ENCODE measurements at regions of chr21 and their contacts with region 1.

Region 1: DNA sequence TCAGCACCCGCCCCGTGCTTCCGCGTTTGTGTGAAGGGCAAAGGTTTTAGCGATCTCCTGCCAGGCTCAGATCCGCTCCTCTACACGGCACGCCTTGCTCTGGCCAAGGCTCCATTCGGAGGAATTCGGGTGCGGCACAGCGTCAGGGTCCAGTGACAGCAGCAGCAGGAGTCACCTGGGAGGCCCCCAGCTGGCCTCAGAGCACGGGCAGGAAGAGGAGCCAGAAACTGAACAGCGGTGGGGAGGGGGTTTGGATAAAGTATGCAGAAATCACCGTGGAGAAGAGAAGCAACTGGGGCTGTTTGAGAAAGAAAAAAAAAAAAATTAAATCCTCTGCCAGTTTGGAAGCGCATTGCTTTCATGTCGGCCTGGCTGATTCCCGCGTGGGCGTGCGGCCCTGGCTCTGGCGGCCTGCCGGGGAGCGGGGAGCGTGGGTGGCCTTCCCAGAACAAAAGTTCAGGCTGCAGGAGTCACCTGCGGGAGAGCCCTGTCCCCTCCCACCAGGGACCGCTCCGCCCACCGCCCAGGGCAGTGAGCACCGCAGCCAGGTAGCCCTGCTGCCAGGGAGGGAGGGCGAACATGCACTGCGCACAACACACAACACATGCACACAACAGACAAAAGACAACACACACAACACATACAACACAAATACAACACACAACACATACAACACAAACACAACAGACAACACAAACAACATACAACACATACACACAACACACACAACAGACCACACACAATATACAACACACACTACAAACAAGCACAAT is 107.6 kb downstream of the ETS2 start:
- DNase-seq: peak; percentile 88 to 93
- H3K4me3 ChIP-seq: peak overlapping the region; percentile 16
- H3K4me3 Mint-ChIP-seq: no peak overlapping the region
- H3K27ac Mint-ChIP-seq: no peak overlapping the region
- H3K4me1 ChIP-seq: peaks cover 47% of the 10 kb centered on the region
- H3K4me1 Mint-ChIP-seq: peaks cover 18% of the 10 kb centered on the region
- H3K27me3 ChIP-seq: no peaks in the 10 kb centered on the region
- H3K27me3 Mint-ChIP-seq: no peaks in the 10 kb centered on the region
- CTCF ChIP-seq: no peak

Region 2: DNA sequence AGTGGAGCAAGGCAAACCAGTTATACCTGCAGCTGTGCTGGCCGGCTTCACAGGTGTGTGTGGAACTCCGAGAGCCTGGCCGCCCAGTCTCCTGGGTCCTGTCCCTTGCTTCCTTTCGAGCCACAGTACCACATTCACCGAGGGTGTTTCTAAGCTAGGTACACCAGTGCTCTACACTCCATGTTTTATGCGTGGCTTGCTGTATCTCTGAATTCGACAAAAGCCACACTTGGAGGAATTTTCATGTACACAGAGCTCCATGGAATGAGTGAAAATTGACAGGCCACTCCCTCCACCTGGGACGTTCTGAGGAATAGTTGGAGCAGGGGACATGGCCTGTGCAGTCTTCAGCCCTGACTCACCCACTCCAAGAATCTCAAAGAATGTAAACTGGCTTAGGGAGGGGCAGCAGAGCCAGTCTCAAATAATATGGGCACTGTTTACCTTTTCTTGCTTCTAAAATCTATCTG is 93.6 kb before region 1 on chr21:
- CTCF ChIA-PET with region 1: no interaction called
- POLR2A ChIA-PET with region 1: no interaction called
- intact Hi-C with region 1: no loop called
- DNase-seq: peak; percentile 63 to 80
- H3K4me3 ChIP-seq: no peak overlapping the region
- H3K4me3 Mint-ChIP-seq: peak overlapping the region; percentile 38
- H3K27ac Mint-ChIP-seq: peak overlapping the region; percentile 85
- H3K4me1 ChIP-seq: peaks cover 15% of the 10 kb centered on the region
- H3K4me1 Mint-ChIP-seq: no peaks in the 10 kb centered on the region
- H3K27me3 ChIP-seq: no peaks in the 10 kb centered on the region
- H3K27me3 Mint-ChIP-seq: no peaks in the 10 kb centered on the region
- CTCF ChIP-seq: no peak

Region 3: GRCh38 chr21:38958940-38959691 is 45.8 kb after region 1 on chr21:
- CTCF ChIA-PET with region 1: no interaction called
- POLR2A ChIA-PET with region 1: interaction called, 3 read pairs
- intact Hi-C with region 1: loop called (anchors 2 kb)
- DNase-seq: peak; percentile 52 to 57
- H3K4me3 ChIP-seq: no peak overlapping the region
- H3K4me3 Mint-ChIP-seq: peak overlapping the region; percentile 57
- H3K27ac Mint-ChIP-seq: peak overlapping the region; percentile 81
- H3K4me1 ChIP-seq: peaks cover 56% of the 10 kb centered on the region
- H3K4me1 Mint-ChIP-seq: peaks cover 19% of the 10 kb centered on the region
- H3K27me3 ChIP-seq: no peaks in the 10 kb centered on the region
- H3K27me3 Mint-ChIP-seq: no peaks in the 10 kb centered on the region
- CTCF ChIP-seq: no peak

Region 4: DNA sequence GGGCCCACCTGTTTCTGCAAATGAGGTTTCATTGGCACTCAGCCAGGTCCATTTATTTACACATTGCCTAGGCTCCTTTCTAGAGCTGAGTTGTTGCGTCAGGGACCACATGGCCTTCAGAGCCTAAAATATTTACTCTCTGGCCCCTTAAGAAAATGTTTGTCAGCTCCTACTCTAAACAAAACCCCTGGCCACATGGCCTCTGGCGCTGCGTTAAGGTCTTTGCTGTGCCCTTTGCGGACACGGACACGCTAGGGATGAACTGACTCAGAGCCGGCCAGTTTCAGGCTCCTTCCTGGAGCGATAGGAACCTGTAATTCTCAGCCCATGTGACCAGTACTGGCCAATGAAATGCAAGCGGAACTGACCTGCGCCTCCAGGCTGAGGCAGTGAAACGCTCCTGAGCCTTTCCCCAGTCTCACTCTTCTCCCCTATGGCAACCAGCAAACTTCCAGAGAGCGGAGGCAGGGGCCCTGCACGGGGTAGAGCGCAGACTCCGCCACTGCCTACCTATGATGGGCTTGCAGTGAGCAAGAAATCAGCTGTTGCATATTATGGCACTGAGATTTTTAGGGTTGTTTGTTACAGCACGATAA is 52.7 kb after region 1 on chr21:
- CTCF ChIA-PET with region 1: no interaction called
- POLR2A ChIA-PET with region 1: no interaction called
- intact Hi-C with region 1: loop called (anchors 2 kb)
- DNase-seq: peak; percentile 89 to 95
- H3K4me3 ChIP-seq: no peak overlapping the region
- H3K4me3 Mint-ChIP-seq: peak overlapping the region; percentile 59
- H3K27ac Mint-ChIP-seq: peak overlapping the region; percentile 90
- H3K4me1 ChIP-seq: peaks cover 20% of the 10 kb centered on the region
- H3K4me1 Mint-ChIP-seq: peaks cover 21% of the 10 kb centered on the region
- H3K27me3 ChIP-seq: no peaks in the 10 kb centered on the region
- H3K27me3 Mint-ChIP-seq: no peaks in the 10 kb centered on the region
- CTCF ChIP-seq: no peak

Region 5: DNA sequence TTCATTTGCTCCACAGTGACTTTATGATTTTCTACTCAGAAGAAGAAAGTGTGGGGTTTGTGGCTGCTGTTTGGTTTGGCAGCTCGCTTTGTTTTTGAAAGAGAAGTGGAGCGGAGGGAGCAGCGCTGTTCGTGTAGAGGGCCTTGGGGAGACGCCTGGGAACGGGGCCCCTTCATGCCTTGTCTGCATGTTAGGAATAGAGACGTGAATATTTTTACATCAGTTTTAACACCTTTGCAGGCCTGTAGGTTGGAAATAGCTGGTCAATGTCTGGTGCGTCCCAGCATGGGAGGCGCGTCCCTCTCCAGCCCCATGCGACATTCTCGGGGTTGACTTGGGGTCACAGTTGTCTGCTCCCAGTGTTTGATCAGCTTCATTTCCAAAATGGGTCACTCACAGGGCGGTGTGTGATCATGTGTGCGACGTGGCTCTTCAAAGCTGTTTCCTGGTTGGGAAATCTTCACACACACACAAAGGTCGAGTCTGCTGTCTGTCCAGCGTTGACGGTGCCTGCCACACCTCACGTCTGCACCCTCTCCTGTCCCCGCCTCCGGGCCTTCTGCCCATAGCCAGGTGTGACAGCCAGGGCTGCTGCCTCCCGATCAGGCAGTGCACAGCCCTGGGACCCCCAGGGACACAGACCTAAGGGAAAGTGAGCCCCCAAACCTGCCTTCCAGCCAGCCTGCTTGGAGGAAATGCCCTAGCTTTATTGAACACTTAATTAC is 120.7 kb after region 1 on chr21:
- CTCF ChIA-PET with region 1: no interaction called
- POLR2A ChIA-PET with region 1: no interaction called
- intact Hi-C with region 1: loop called (anchors 10 kb)
- DNase-seq: peak; percentile 69 to 84
- H3K4me3 ChIP-seq: no peak overlapping the region
- H3K4me3 Mint-ChIP-seq: peak overlapping the region; percentile 30
- H3K27ac Mint-ChIP-seq: peak overlapping the region; percentile 83
- H3K4me1 ChIP-seq: peaks cover 32% of the 10 kb centered on the region
- H3K4me1 Mint-ChIP-seq: peaks cover 34% of the 10 kb centered on the region
- H3K27me3 ChIP-seq: no peaks in the 10 kb centered on the region
- H3K27me3 Mint-ChIP-seq: no peaks in the 10 kb centered on the region
- CTCF ChIP-seq: no peak

Region 6: DNA sequence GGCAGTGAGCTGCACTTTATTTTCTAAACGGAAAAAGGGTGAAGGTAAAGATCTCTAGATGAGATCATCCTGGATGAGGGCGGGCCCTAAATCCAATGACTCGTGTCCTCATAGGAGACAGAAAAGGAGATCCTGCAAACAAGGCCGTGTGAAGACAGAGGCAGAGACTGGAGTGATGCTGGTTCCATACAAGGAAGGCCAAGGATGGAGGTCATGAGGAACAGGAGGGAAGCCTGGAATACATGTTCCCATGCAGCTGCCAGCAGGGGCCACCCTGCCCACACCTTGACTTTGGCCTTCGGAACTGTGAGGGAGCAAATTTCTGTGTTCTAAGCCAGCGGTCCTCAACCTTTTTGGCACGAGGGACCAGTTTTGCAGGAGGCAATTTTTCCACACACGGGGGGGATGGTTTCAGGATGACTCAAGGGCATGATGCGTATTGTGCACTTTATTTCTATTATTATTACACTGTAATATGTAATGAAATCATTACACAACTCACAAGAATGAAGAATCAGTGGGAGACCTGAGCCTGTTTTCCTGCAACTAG is 175.6 kb after region 1 on chr21:
- CTCF ChIA-PET with region 1: no interaction called
- POLR2A ChIA-PET with region 1: no interaction called
- intact Hi-C with region 1: loop called (anchors 10 kb)
- DNase-seq: no peak
- H3K4me3 ChIP-seq: no peak overlapping the region
- H3K4me3 Mint-ChIP-seq: no peak overlapping the region
- H3K27ac Mint-ChIP-seq: no peak overlapping the region
- H3K4me1 ChIP-seq: peaks cover 3% of the 10 kb centered on the region; the same call in 1 of the 2 replicates
- H3K4me1 Mint-ChIP-seq: peaks cover 9% of the 10 kb centered on the region
- H3K27me3 ChIP-seq: no peaks in the 10 kb centered on the region
- H3K27me3 Mint-ChIP-seq: no peaks in the 10 kb centered on the region
- CTCF ChIP-seq: no peak